ENCODE measurements at regions of chr3 and their contacts with region 1.

Region 1: GRCh38 chr3:141303481-141304223 is 64.7 kb upstream of the ZBTB38 start:
- DNase-seq: peak; percentile 86
- ATAC-seq: peak; percentile 62
- H3K4me3 ChIP-seq: no peak overlapping the region
- H3K27ac ChIP-seq: no peak overlapping the region
- H3K4me1 ChIP-seq: peaks cover 6% of the 10 kb centered on the region
- H3K27me3 ChIP-seq: no peaks in the 10 kb centered on the region
- CTCF ChIP-seq: peak; percentile 85
- POLR2A ChIP-seq: no peak
- RAD21 ChIP-seq: peak; percentile 73

Region 2: GRCh38 chr3:141000027-141000663 is 303.5 kb before region 1 on chr3:
- CTCF ChIA-PET with region 1: interaction called, 6 read pairs
- POLR2A ChIA-PET with region 1: no interaction called
- dilution Hi-C with region 1: no loop called
- in situ Hi-C with region 1: no loop called
- intact Hi-C with region 1: loop called (anchors 5 kb)
- DNase-seq: peak; percentile 42
- ATAC-seq: peak; percentile 100
- H3K4me3 ChIP-seq: no peak overlapping the region
- H3K27ac ChIP-seq: no peak overlapping the region
- H3K4me1 ChIP-seq: no peaks in the 10 kb centered on the region
- H3K27me3 ChIP-seq: peaks cover 5% of the 10 kb centered on the region
- CTCF ChIP-seq: peak; percentile 70
- POLR2A ChIP-seq: no peak
- RAD21 ChIP-seq: peak; percentile 75

Region 3: DNA sequence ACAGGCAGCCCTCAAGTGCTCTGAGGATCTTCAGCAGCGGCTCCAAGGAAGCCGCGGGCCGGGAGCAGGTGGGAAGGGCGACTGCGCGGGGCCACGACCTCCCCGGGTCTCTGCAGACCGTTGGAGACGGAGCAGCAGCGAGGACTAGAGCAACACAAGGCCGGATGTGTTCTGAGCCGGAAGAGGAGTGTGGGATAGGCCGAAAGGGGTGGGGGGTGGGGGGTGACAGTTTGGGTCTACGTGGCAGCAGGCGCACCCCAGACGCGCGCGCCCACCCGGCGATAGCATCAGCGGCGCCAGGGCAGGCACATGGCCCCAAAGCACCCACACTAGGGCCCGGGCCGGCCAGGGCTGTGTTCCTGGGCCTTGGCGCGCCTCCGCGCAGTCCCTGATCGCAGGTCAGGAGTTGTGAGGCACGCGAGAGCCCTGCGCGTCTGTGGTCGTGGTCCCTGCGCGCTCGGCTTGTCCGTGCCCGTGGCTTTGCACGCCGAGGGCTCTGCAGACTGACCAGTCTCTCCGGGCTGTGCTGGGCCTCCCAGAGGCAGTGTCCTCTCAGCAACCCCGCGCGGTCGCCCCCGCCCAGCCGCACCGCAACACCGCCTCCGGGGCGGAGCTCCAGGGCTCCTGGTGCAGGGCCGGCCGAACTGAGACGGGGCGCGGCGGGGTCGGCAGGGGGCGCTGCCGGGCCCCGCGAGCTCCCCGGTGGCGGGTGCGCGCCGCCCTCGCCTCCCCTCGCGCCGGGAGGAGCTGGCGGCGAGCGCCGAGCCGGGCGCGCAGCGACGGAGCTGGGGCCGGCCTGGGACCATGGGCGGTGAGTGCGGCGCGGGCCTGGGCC is 72.3 kb before region 1 on chr3 and contains the start of gene PXYLP1:
- CTCF ChIA-PET with region 1: interaction called, 14 read pairs
- POLR2A ChIA-PET with region 1: no interaction called
- dilution Hi-C with region 1: no loop called
- in situ Hi-C with region 1: no loop called
- intact Hi-C with region 1: loop called (anchors 2 kb)
- DNase-seq: peak; percentile 85
- ATAC-seq: peak; percentile 98
- H3K4me3 ChIP-seq: peak within 1 kb of the TSS; percentile 71
- H3K27ac ChIP-seq: peak within 1 kb of the TSS; percentile 61
- H3K4me1 ChIP-seq: peaks cover 5% of the 10 kb centered on the region; the same call in 1 of the 2 replicates
- H3K27me3 ChIP-seq: peaks cover 3% of the 10 kb centered on the region; the same call in 1 of the 2 replicates
- CTCF ChIP-seq: peak; percentile 95
- POLR2A ChIP-seq: peak; percentile 82
- RAD21 ChIP-seq: peak; percentile 70
- total RNA-seq, gene PXYLP1: 13.3 and 15.6 TPM in 2 replicates

Region 4: GRCh38 chr3:141544697-141545096 is 241.0 kb after region 1 on chr3:
- CTCF ChIA-PET with region 1: no interaction called
- POLR2A ChIA-PET with region 1: no interaction called
- dilution Hi-C with region 1: no loop called
- in situ Hi-C with region 1: loop called (anchors 10 kb)
- intact Hi-C with region 1: no loop called
- DNase-seq: no peak
- ATAC-seq: no peak
- H3K4me3 ChIP-seq: no peak overlapping the region
- H3K27ac ChIP-seq: no peak overlapping the region
- H3K4me1 ChIP-seq: no peaks in the 10 kb centered on the region
- H3K27me3 ChIP-seq: no peaks in the 10 kb centered on the region
- CTCF ChIP-seq: no peak
- POLR2A ChIP-seq: no peak
- RAD21 ChIP-seq: no peak